ENCODE measurements at regions of chr19 and their contacts with region 1.

Region 1: DNA sequence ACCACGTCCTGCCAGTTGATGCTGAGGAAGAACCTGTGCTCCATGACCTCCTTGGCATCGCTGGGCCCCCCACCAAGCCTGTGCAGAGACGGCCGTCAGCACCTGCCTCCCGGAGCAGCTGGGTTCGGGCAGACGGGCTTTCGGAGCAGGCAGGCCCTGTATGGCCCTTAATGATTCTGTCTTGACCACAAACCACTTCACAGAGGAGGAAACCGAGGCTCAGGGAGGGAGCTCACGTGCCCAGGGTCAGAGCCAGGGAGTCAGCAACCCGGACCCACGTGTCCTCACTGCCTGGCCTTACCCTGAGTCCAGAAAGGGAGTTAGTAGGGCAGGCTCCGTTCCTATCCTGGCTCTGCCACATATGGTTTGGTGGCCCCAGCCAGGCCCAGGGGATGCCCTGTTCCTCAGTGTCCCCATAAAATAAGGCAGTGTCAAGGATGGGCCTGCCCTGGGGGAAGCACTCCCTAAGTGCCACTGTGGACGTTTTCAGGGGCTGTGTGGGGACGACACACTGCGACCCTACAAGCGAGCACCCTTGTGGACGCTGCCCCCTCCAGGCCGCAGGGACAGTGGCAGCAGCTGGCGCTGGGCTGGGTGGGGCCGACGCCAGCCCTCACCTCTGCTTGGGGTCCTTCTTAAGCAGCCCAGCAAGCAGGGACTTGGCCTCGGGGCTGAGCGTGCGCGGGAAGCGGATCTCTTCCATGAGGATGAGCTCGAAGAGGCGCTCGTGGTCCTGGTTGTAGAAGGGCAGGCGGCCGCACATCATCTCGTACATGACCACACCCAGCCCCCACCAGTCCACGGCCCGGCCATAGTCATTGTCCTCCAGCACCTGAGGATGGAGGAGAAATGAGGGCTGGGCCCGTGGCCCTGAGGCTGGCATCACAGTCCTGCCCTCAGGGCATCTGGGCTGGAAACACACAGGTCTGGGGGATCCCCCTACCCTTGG is 9.1 kb upstream of the CCNP start:
- DNase-seq: peak in 1 of 5 donors; percentile 18
- H3K4me3 ChIP-seq: no peak overlapping the region
- H3K27ac ChIP-seq: no peak overlapping the region
- H3K4me1 ChIP-seq: no peaks in the 10 kb centered on the region
- H3K27me3 ChIP-seq: no peaks in the 10 kb centered on the region
- CTCF ChIP-seq: no peak
- EP300 ChIP-seq: no peak
- POLR2A ChIP-seq: no peak

Region 2: GRCh38 chr19:39645800-39646411 is 589.6 kb before region 1 on chr19:
- intact Hi-C with region 1: no loop called
- DNase-seq: no peak
- H3K4me3 ChIP-seq: no peak overlapping the region
- H3K27ac ChIP-seq: no peak overlapping the region
- H3K4me1 ChIP-seq: no peaks in the 10 kb centered on the region
- H3K27me3 ChIP-seq: no peaks in the 10 kb centered on the region
- CTCF ChIP-seq: no peak
- EP300 ChIP-seq: no peak
- POLR2A ChIP-seq: no peak

Region 3: DNA sequence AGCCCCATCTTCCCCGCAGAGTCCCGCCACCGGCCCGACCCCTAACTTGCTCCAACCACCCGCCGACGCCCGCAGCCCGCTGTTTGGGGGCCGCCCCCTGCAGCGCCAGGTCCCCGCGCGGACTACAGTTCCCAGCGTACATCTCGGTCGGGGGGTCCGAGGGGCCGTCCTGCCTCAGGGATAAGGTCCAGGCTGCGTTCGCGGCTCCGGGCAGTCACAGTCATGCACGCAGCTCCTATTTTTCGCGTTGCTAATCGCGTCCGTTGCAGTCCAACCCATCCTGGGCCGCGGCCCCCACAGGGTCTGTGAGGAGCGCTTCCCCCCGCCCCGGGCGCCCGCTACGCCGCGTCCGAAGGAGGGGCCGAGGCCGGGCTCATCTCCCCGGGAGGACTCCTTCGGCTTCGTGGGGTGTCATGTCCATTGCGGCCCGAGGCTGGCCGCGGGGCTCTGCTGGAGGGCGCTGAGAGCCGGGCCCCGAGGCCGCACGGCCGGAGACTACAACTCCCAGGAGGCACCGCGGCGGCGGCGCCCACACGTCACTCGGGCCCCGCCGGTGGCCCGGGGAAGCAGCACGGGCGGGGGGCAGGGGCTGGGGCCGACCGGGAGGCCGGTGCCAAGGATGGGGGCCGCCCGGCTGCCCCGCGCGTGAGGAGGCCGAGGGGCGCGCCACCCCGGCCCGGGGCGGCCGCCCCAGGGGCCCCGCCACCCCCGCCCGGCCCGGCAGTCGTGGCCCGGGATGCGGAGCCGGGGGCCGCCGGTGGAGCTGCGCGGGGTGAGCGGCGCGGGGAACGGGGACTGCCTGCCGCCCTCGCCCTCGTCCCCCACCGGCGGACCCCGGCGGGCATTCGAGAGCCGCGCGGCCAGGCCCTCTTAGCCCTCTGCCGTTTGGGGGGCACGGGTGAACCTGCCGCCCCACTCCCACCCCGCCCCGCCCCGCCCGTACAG is 44.4 kb before region 1 on chr19 and contains the start of gene MAP3K10:
- intact Hi-C with region 1: loop called in 1 of 4 experiments (anchors 5 kb)
- DNase-seq: peak; percentile 63 to 85 (median 79)
- H3K4me3 ChIP-seq: peak within 1 kb of the TSS; percentile 81
- H3K27ac ChIP-seq: peak within 1 kb of the TSS; percentile 38 to 80
- H3K4me1 ChIP-seq: peaks cover 9% of the 10 kb centered on the region
- H3K27me3 ChIP-seq: no peaks in the 10 kb centered on the region
- CTCF ChIP-seq: no peak
- EP300 ChIP-seq: no peak
- POLR2A ChIP-seq: no peak
- total RNA-seq, gene MAP3K10: 8.3 to 26.2 (median 14.6) TPM

Measured in ovary (tissue), 10 donors.